Esophagus muscularis mucosa (tissue), 4 donors: ENCODE measurements at regions of chr20 and their contacts with region 1.

Region 1: GRCh38 chr20:11274141-11274594 is 600.4 kb upstream of the JAG1 start:
- DNase-seq: no peak
- H3K4me3 ChIP-seq: no peak overlapping the region
- H3K27ac ChIP-seq: no peak overlapping the region
- H3K4me1 ChIP-seq: no peaks in the 10 kb centered on the region
- H3K27me3 ChIP-seq: no peaks in the 10 kb centered on the region
- CTCF ChIP-seq: peak; percentile 25 to 41 (median 28)
- EP300 ChIP-seq: no peak
- POLR2A ChIP-seq: no peak

Region 2: GRCh38 chr20:10476319-10476724 is 797.8 kb before region 1 on chr20:
- intact Hi-C with region 1: loop called (anchors 10 kb)
- DNase-seq: no peak
- H3K4me3 ChIP-seq: no peak overlapping the region
- H3K27ac ChIP-seq: no peak overlapping the region
- H3K4me1 ChIP-seq: peaks cover 0 to 19% (median 16%) of the 10 kb centered on the region in 4 donors
- H3K27me3 ChIP-seq: no peaks in the 10 kb centered on the region
- CTCF ChIP-seq: no peak
- EP300 ChIP-seq: no peak
- POLR2A ChIP-seq: no peak

Region 3: DNA sequence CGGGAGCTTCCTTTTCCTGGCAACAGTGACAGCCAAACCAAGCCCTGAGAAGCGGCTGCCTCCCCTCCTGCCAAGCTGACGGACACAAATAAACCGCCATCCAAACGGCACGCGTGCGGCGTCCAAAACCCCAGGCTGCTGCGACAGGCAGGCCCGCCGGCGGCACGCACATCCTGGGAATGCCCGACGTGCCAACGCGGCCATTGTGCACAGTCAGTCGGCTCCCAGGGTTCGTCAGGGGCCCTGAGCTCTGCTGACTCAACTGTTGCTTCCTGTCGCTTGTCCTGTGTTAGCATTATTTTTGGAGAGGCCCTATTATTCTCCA is 607.1 kb before region 1 on chr20:
- intact Hi-C with region 1: loop called (anchors 10 kb)
- DNase-seq: no peak
- H3K4me3 ChIP-seq: peak overlapping the region in 3 of 4 donors; percentile 10 to 32 (median 10)
- H3K27ac ChIP-seq: peak overlapping the region; percentile 49 to 60 (median 56)
- H3K4me1 ChIP-seq: peaks cover 42 to 77% (median 70%) of the 10 kb centered on the region in 4 donors
- H3K27me3 ChIP-seq: peaks cover 0 to 7% (median 0%) of the 10 kb centered on the region in 4 donors
- CTCF ChIP-seq: no peak
- EP300 ChIP-seq: no peak
- POLR2A ChIP-seq: no peak

Region 4: DNA sequence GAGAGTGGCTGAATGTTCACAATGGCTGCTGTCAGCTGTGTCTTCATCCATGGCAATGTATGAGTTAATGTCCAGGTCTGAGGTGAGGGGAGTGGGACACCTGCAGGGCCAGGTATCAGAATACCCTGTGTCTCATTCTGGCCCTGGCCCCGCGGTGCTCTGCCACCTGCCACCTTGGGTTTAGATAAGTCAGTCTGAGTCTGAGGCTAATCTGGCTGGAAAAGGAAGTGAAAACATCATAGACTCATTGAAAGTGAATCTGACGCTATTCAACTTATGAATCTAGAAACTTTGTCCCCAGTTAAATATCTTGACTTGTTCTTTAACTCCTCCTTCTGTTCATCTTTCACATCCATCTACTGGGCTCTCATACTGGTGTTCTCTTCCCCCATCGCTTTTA is 333.2 kb before region 1 on chr20:
- intact Hi-C with region 1: no loop called
- DNase-seq: no peak
- H3K4me3 ChIP-seq: no peak overlapping the region
- H3K27ac ChIP-seq: no peak overlapping the region
- H3K4me1 ChIP-seq: peaks cover 0 to 4% (median 2%) of the 10 kb centered on the region in 4 donors
- H3K27me3 ChIP-seq: no peaks in the 10 kb centered on the region
- CTCF ChIP-seq: no peak
- EP300 ChIP-seq: no peak
- POLR2A ChIP-seq: no peak

Region 5: DNA sequence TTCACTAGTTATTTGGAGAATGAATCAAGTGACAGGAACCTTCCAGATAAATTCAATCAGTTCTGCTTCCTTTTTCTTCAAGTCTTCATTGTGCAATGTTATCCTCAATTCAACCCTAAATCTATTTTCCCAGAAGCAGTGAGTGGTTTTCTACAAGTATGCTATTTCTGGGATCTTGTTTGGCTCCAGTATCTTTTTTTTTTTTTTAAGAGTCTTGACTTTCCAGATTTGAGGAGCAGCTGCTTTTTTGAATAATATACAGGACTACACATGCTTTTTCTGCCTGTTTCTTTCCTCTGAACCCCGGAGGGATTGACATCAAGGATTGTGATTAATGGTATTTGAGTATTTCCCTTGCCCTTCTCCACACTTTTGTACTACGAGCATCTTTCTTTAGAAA is 261.2 kb before region 1 on chr20:
- intact Hi-C with region 1: no loop called
- DNase-seq: no peak
- H3K4me3 ChIP-seq: no peak overlapping the region
- H3K27ac ChIP-seq: peak overlapping the region in 1 of 4 donors; percentile 60
- H3K4me1 ChIP-seq: peaks cover 0 to 6% (median 1%) of the 10 kb centered on the region in 4 donors
- H3K27me3 ChIP-seq: no peaks in the 10 kb centered on the region
- CTCF ChIP-seq: no peak
- EP300 ChIP-seq: no peak
- POLR2A ChIP-seq: no peak

Region 6: GRCh38 chr20:11315525-11315924 is 41.4 kb after region 1 on chr20:
- intact Hi-C with region 1: no loop called
- DNase-seq: no peak
- H3K4me3 ChIP-seq: no peak overlapping the region
- H3K27ac ChIP-seq: no peak overlapping the region
- H3K4me1 ChIP-seq: no peaks in the 10 kb centered on the region
- H3K27me3 ChIP-seq: no peaks in the 10 kb centered on the region
- CTCF ChIP-seq: no peak
- EP300 ChIP-seq: no peak
- POLR2A ChIP-seq: no peak